ENCODE measurements at regions of chr12 and their contacts with region 1.

Region 1: DNA sequence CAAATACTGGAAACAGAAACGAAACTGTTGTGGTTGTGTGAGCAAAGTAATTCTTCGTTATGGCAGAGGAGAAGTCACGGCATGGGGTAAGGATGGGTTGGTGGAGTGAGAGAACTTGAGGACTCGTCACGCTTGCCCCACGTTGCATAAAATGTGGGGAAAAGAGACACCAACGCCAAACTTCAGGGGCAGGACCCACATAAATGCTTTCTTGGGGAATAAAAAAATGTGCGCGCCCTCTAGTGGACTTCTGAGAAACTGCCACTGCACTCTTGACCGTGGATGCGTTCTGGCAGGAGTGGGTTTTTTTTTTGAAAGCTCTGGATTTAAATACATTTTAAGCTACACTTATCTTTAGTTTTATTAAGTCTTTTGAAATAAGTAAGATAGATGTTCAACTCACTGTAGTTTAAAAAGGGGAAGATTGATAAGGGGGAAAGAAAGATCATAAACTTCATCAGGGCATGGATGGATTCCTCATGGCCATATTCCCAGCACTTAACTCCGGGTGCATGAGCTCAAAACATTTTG is 4.1 kb upstream of the IGF1 start:
- DNase-seq: peak; percentile 62
- H3K4me3 Mint-ChIP-seq: peak overlapping the region; percentile 67
- H3K27ac Mint-ChIP-seq: peak overlapping the region; percentile 70
- H3K4me1 Mint-ChIP-seq: peaks cover 8% of the 10 kb centered on the region
- H3K27me3 Mint-ChIP-seq: no peaks in the 10 kb centered on the region
- CTCF ChIP-seq: peak; percentile 80

Region 2: GRCh38 chr12:101919447-101919846 is 565.0 kb before region 1 on chr12:
- CTCF ChIA-PET with region 1: interaction called, 5 read pairs
- POLR2A ChIA-PET with region 1: no interaction called
- intact Hi-C with region 1: loop called (anchors 2 kb)
- DNase-seq: no peak
- H3K4me3 Mint-ChIP-seq: no peak overlapping the region
- H3K27ac Mint-ChIP-seq: no peak overlapping the region
- H3K4me1 Mint-ChIP-seq: peaks cover 17% of the 10 kb centered on the region
- H3K27me3 Mint-ChIP-seq: no peaks in the 10 kb centered on the region
- CTCF ChIP-seq: no peak

Region 3: DNA sequence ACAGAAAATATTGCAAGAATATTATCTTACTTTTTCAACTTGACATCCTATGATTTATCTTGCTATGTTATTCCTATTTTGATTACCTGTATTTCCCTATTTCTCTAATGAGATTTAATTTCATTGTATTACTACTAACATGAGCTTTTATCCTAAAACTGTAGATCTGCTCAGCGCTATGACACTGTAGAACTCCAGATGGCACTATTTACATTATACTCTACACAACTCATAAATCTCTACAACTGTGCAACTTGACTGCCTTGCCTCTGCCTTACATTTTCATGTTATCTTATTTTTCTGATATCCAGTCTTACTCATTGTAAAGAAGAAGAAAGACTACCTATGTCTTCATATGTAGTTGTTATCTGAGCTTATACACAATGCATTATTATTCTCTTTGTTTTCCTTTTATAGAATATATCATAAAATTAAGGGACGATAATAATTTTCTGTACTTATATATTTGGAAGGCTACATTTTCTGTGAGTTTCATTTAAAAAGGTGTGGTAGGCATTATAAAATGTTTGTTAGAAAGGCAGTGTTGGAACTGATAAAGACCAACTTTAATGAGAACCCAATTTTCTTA is 388.7 kb before region 1 on chr12:
- CTCF ChIA-PET with region 1: interaction called, 29 read pairs
- POLR2A ChIA-PET with region 1: no interaction called
- intact Hi-C with region 1: loop called (anchors 1 kb)
- DNase-seq: peak; percentile 23
- H3K4me3 Mint-ChIP-seq: no peak overlapping the region
- H3K27ac Mint-ChIP-seq: no peak overlapping the region
- H3K4me1 Mint-ChIP-seq: peaks cover 7% of the 10 kb centered on the region
- H3K27me3 Mint-ChIP-seq: no peaks in the 10 kb centered on the region
- CTCF ChIP-seq: peak; percentile 39

Region 4: GRCh38 chr12:102169922-102170621 is 314.4 kb before region 1 on chr12:
- CTCF ChIA-PET with region 1: interaction called, 85 read pairs
- POLR2A ChIA-PET with region 1: interaction called, 3 read pairs
- intact Hi-C with region 1: loop called (anchors 1 kb)
- DNase-seq: peak; percentile 44
- H3K4me3 Mint-ChIP-seq: no peak overlapping the region
- H3K27ac Mint-ChIP-seq: peak overlapping the region; percentile 13
- H3K4me1 Mint-ChIP-seq: no peaks in the 10 kb centered on the region
- H3K27me3 Mint-ChIP-seq: no peaks in the 10 kb centered on the region
- CTCF ChIP-seq: peak; percentile 66

Region 5: GRCh38 chr12:102462795-102463465 is 21.6 kb before region 1 on chr12:
- CTCF ChIA-PET with region 1: interaction called, 39 read pairs
- POLR2A ChIA-PET with region 1: interaction called, 3 read pairs
- intact Hi-C with region 1: no loop called
- DNase-seq: peak; percentile 64
- H3K4me3 Mint-ChIP-seq: no peak overlapping the region
- H3K27ac Mint-ChIP-seq: peak overlapping the region; percentile 57
- H3K4me1 Mint-ChIP-seq: peaks cover 25% of the 10 kb centered on the region
- H3K27me3 Mint-ChIP-seq: no peaks in the 10 kb centered on the region
- CTCF ChIP-seq: no peak

Region 6: GRCh38 chr12:102501773-102502172 is 17.3 kb after region 1 on chr12:
- CTCF ChIA-PET with region 1: interaction called, 13 read pairs
- POLR2A ChIA-PET with region 1: no interaction called
- intact Hi-C with region 1: no loop called
- DNase-seq: no peak
- H3K4me3 Mint-ChIP-seq: no peak overlapping the region
- H3K27ac Mint-ChIP-seq: no peak overlapping the region
- H3K4me1 Mint-ChIP-seq: no peaks in the 10 kb centered on the region
- H3K27me3 Mint-ChIP-seq: no peaks in the 10 kb centered on the region
- CTCF ChIP-seq: no peak